ENCODE measurements at regions of chr7 and their contacts with region 1.

Region 1: DNA sequence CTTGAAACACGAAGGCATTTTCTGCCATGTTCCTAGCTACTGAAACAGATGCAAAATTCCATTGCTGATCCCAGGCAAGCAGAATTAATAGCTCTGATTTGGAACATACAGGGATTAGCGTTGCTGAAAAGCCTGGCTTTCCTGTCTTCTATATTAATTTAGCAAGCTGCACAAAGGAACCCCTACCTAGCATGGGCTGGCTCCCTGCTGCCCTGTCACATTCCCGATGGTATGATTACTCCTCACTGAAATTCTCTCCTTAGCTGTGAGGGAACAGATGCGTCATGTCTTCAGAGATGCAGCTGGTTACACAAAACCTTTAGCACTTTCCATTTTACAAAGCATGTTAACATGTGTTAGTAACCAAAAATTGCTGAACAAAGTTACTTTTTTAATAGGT is 878.9 kb downstream of the TYW1 start:
- DNase-seq: no peak
- H3K4me3 ChIP-seq: no peak overlapping the region
- H3K27ac ChIP-seq: no peak overlapping the region
- H3K4me1 ChIP-seq: no peaks in the 10 kb centered on the region
- H3K27me3 ChIP-seq: peaks cover 0 to 25% (median 0%) of the 10 kb centered on the region in 4 donors
- CTCF ChIP-seq: no peak
- POLR2A ChIP-seq: no peak

Region 2: GRCh38 chr7:67823345-67823744 is 52.2 kb before region 1 on chr7:
- intact Hi-C with region 1: loop called (anchors 10 kb)
- DNase-seq: no peak
- H3K4me3 ChIP-seq: no peak overlapping the region
- H3K27ac ChIP-seq: no peak overlapping the region
- H3K4me1 ChIP-seq: no peaks in the 10 kb centered on the region
- H3K27me3 ChIP-seq: no peaks in the 10 kb centered on the region
- CTCF ChIP-seq: no peak
- POLR2A ChIP-seq: no peak

Region 3: GRCh38 chr7:68133045-68133444 is 257.5 kb after region 1 on chr7:
- intact Hi-C with region 1: no loop called
- DNase-seq: no peak
- H3K4me3 ChIP-seq: no peak overlapping the region
- H3K27ac ChIP-seq: no peak overlapping the region
- H3K4me1 ChIP-seq: no peaks in the 10 kb centered on the region
- H3K27me3 ChIP-seq: no peaks in the 10 kb centered on the region
- CTCF ChIP-seq: no peak
- POLR2A ChIP-seq: no peak

Measured in esophagus squamous epithelium (tissue), 5 donors.